GM13976 (cell line): ENCODE measurements at regions of chr13 and their contacts with region 1.

Region 1: GRCh38 chr13:99656092-99656745 is 154.9 kb downstream of the TM9SF2 start:
- DNase-seq: peak; percentile 76
- CTCF ChIP-seq: peak; percentile 79

Region 2: DNA sequence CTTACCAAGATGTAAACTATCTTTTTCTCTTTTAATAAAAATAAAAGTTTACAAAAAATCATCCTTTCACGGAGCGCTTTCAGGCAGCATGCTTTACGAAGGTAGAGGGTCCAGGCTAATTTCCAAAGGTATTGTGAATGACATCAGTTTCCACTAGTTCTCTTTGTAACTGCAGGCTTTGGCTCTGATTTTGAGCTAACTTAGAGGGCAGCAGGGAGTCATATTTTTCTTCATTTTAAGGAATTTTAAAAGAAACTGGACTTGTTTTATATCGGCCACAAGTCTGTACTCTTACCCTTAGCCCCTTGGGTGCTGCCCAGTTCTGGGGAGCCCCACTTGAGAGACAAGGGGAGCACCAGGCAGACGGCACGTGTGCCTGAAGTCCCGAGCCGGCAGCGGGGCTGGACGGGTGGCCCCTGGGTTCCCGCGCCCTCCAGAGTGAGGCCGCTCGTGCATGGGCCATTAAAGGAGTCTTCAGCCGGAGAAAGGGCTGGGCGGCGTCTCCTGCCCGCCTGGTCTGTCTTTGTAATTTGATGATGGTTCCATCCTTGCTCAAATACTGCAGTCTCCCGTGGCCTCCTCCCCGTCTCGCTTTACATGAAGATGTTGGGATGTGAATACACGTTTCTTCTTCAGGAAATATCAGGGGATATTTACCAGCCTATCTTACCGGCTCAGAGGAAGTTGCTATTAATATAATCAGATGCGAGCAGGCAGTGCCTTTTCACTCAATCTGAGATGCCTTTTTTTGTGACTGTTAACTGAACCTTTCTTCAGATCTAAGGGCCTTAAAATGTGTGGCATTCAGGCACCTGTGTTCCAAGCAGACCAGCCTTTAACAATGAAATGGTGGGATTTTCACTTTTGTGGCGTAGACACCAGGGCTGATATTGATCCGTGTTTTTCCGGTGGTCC is 865.0 kb after region 1 on chr13:
- in situ Hi-C with region 1: loop called (anchors 10 kb)
- DNase-seq: no peak
- CTCF ChIP-seq: no peak